Activated CD8-positive, alpha-beta T cell treated with anti-CD3 and anti-CD28 coated beads for 36 hours (primary cell): ENCODE measurements at regions of chr2 and their contacts with region 1.

Region 1: DNA sequence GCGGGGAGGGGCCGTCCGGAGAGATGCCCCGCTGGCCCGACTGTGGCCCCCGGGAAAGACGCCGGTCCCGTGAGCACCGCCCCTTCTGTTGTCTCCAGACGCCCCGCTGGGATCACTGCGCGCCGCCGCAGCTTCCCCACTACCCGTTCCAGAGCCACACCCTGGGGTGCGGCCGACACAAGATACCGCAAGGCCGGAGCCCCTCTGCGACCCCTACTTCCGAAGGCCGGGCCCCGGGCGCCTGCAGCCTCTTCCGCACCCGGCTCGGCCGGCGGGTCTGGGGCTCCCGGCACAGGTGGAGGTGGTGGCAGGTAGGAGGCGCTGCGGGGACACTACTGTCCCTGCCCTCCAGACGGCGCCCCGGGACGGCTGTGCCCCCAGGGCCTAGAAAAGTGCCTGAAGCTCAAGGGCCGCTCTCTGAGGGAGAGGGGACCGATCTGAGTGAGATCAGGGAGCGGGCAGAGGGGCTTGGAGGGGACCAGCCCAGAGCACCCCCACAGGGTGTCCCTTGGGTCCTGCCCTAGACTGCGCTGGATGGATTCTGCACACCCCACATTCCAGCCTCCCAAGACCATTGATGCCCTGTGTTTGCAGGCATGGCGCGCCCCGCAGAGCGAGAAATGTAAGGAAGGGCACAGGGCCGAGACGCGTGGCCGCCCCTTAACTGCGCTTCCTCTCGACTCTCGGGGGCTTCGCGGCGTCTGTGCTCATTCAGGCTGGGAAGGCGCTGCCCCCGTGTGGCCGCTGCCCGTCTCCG is 80.0 kb downstream of the GFPT1 start:
- DNase-seq: peak; percentile 89
- ATAC-seq: peak; percentile 96
- H3K4me3 Mint-ChIP-seq: peak overlapping the region; percentile 66
- H3K27ac Mint-ChIP-seq: no peak overlapping the region
- H3K4me1 Mint-ChIP-seq: peaks cover 6% of the 10 kb centered on the region
- H3K27me3 Mint-ChIP-seq: peaks cover 22% of the 10 kb centered on the region
- CTCF ChIP-seq: peak; percentile 78

Region 2: DNA sequence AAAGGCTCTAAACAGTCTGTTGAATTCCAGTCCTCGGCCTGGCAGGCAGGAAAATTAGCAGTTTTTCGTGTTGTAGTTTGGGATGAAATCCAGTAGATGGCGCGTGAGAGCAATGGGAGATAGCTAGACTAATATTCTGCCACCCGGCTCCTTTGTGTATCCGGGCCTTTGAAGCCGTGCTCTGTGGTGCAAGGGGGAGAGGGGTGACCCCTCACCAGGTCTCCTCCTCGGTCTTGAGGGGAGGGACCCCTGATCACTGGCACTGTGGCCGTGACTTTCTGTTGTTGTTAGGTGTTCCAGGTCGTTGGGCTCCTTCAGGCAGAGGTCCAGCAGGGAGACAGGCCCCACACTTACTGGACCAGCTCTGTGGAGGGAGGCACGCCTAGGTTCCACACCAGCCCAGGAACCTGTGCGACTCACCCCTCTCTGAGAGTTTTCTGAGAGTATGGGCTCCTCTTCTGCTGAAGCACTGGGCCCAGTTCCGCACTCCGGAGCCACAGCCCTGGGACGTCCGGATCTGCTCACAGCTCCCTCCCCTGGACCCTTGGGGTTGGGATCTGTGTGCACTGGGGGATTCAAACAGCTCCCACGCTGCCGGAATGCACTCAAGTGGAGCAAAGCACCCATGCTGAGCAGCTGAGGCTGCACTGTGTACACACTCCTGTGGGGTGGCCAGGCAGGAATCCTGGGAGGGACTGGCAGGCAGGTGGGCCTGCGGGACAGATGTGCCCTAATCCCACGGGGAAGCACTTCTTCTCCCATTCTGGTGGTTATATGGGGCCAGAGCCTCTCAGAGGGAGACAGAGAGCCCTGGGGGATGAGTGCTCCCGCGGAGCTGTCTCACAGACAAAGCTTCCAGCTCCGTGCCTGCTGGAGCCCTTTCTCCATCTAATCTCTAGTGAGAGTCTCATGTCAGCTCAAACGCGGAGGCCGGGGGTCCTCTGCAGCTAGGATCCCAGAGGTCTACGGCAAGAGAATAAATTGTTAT is 363.1 kb before region 1 on chr2:
- CTCF ChIA-PET with region 1: interaction called, 30 read pairs
- POLR2A ChIA-PET with region 1: no interaction called
- intact Hi-C with region 1: loop called (anchors 10 kb)
- DNase-seq: peak; percentile 63
- ATAC-seq: peak; percentile 87
- H3K4me3 Mint-ChIP-seq: no peak overlapping the region
- H3K27ac Mint-ChIP-seq: no peak overlapping the region
- H3K4me1 Mint-ChIP-seq: no peaks in the 10 kb centered on the region
- H3K27me3 Mint-ChIP-seq: peaks cover 21% of the 10 kb centered on the region
- CTCF ChIP-seq: peak; percentile 87

Region 3: DNA sequence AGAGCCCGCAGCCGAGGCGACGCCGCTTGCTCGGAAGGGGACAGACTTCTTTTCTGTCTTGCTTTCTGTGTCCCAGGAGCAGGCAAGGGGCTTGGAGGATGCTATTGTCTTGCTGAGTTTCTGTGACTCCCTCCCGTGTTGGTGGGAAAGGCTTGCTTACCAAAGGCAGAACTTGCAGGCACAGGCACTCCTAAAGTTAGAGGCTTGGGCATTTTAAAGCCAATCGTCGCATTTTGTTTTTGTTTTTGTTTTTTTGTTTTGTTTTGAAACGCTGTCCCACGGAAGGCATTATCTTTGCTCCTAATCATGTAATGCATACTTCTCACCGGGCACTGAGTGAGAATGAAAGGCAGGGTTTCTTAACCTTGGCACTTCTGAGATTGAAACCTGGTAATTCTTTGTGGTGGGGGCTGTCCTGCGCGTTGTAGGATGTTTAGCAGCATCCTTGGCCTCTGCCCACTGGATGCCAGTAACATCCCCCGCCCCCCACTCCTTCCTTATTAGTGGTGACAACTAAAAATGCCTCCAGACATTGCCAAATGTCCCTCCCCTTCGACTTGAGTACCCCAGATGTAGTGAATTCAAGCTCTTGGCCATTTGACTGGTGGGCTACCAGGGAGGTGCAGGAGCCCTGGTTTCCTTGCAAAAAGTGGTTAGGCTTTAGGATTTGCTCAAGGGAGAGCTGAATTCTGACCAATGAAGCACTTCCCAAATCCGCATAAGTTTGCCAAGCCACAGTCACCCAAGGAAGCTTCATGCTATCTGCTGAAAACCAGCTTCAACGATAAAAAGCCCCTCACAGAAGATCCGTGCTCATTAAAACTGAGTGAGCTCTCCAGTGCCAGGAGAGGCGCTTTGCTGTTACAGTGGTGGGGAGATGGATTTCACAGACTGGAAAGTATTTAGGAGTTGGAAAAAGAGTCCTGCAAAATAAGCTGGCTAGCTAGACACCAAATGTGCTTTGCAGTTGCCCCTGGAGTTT is 292.9 kb before region 1 on chr2:
- CTCF ChIA-PET with region 1: interaction called, 12 read pairs
- POLR2A ChIA-PET with region 1: no interaction called
- intact Hi-C with region 1: no loop called
- DNase-seq: peak; percentile 50
- ATAC-seq: peak; percentile 59
- H3K4me3 Mint-ChIP-seq: peak overlapping the region; percentile 68
- H3K27ac Mint-ChIP-seq: no peak overlapping the region
- H3K4me1 Mint-ChIP-seq: peaks cover 12% of the 10 kb centered on the region
- H3K27me3 Mint-ChIP-seq: peaks cover 48% of the 10 kb centered on the region
- CTCF ChIP-seq: no peak

Region 4: GRCh38 chr2:69026026-69026425 is 281.0 kb before region 1 on chr2:
- CTCF ChIA-PET with region 1: interaction called, 15 read pairs
- POLR2A ChIA-PET with region 1: interaction called, 3 read pairs
- intact Hi-C with region 1: loop called (anchors 5 kb)
- DNase-seq: peak; percentile 58
- ATAC-seq: peak; percentile 79
- H3K4me3 Mint-ChIP-seq: no peak overlapping the region
- H3K27ac Mint-ChIP-seq: no peak overlapping the region
- H3K4me1 Mint-ChIP-seq: no peaks in the 10 kb centered on the region
- H3K27me3 Mint-ChIP-seq: peaks cover 19% of the 10 kb centered on the region
- CTCF ChIP-seq: peak; percentile 67

Region 5: DNA sequence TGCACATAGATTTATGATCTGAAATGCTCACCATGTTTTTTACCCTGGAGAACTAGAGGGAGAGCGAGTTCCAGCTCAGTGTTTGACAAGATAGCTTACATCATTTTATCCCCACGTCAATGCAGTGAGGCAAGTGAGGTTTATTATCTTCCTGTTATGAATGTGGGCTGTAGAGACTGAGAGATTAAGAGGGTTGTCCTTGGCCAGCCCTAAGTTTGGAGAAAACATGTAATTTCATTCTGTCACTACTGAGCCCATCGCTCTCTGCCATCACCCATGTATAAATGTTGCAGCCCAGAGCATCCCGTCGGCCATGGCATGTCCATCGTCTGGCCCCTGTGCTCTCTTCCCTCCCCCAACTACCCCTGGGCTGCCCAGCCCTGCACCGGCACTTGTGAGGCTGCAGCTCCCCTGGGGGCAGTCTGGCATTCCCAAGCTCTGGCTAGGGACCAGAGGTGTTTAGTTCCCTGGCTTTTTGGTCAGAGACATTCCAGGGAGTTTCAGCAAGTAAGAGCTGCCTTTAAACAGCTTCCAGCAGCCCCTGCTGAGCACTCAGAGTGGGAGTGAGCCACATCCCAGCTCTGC is 157.3 kb before region 1 on chr2:
- CTCF ChIA-PET with region 1: no interaction called
- POLR2A ChIA-PET with region 1: no interaction called
- intact Hi-C with region 1: no loop called
- DNase-seq: no peak
- ATAC-seq: no peak
- H3K4me3 Mint-ChIP-seq: no peak overlapping the region
- H3K27ac Mint-ChIP-seq: no peak overlapping the region
- H3K4me1 Mint-ChIP-seq: no peaks in the 10 kb centered on the region
- H3K27me3 Mint-ChIP-seq: peaks cover 3% of the 10 kb centered on the region
- CTCF ChIP-seq: no peak

Region 6: GRCh38 chr2:69285379-69285894 is 21.6 kb before region 1 on chr2:
- CTCF ChIA-PET with region 1: interaction called, 11 read pairs
- POLR2A ChIA-PET with region 1: no interaction called
- intact Hi-C with region 1: no loop called
- DNase-seq: no peak
- ATAC-seq: no peak
- H3K4me3 Mint-ChIP-seq: no peak overlapping the region
- H3K27ac Mint-ChIP-seq: no peak overlapping the region
- H3K4me1 Mint-ChIP-seq: no peaks in the 10 kb centered on the region
- H3K27me3 Mint-ChIP-seq: peaks cover 7% of the 10 kb centered on the region
- CTCF ChIP-seq: no peak

Region 7: DNA sequence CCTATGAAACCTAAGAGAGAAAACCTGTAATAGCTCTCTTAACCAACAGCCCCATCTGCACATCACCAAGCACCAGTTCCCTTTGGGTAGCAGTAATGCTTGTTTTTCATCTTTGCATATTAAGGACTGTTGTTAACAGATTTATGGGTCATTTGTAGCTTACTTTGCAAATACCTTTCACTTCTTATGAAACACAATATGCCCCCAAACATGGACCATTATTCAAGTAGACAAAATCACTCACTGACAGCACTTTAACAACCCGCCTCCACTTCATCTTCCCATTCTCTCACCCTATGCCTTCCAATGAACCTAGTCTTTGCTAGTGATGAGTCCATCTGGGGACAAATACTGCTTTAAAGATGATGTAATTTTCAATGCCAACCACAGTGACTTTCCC is 15.6 kb after region 1 on chr2:
- CTCF ChIA-PET with region 1: interaction called, 23 read pairs
- POLR2A ChIA-PET with region 1: no interaction called
- intact Hi-C with region 1: no loop called
- DNase-seq: no peak
- ATAC-seq: no peak
- H3K4me3 Mint-ChIP-seq: no peak overlapping the region
- H3K27ac Mint-ChIP-seq: no peak overlapping the region
- H3K4me1 Mint-ChIP-seq: no peaks in the 10 kb centered on the region
- H3K27me3 Mint-ChIP-seq: no peaks in the 10 kb centered on the region
- CTCF ChIP-seq: no peak

Region 8: GRCh38 chr2:69386789-69387734 is 80.1 kb after region 1 on chr2 and contains the start of gene GFPT1:
- CTCF ChIA-PET with region 1: no interaction called
- POLR2A ChIA-PET with region 1: no interaction called
- intact Hi-C with region 1: no loop called
- DNase-seq: peak; percentile 94
- ATAC-seq: peak; percentile 97
- H3K4me3 Mint-ChIP-seq: peak within 1 kb of the TSS; percentile 89
- H3K27ac Mint-ChIP-seq: peak within 1 kb of the TSS; percentile 93
- H3K4me1 Mint-ChIP-seq: peaks cover 38% of the 10 kb centered on the region
- H3K27me3 Mint-ChIP-seq: no peaks in the 10 kb centered on the region
- CTCF ChIP-seq: no peak
- total RNA-seq, gene GFPT1: 37.8 to 38.0 TPM

Region 9: GRCh38 chr2:69405306-69405705 is 98.3 kb after region 1 on chr2:
- CTCF ChIA-PET with region 1: no interaction called
- POLR2A ChIA-PET with region 1: no interaction called
- intact Hi-C with region 1: no loop called
- DNase-seq: no peak
- ATAC-seq: no peak
- H3K4me3 Mint-ChIP-seq: no peak overlapping the region
- H3K27ac Mint-ChIP-seq: no peak overlapping the region
- H3K4me1 Mint-ChIP-seq: peaks cover 7% of the 10 kb centered on the region
- H3K27me3 Mint-ChIP-seq: no peaks in the 10 kb centered on the region
- CTCF ChIP-seq: no peak